Left lung (tissue), 14 donors: ENCODE measurements at regions of chr21 and their contacts with region 1.

Region 1: GRCh38 chr21:42107881-42108553 is 36.9 kb downstream of the UMODL1 start:
- DNase-seq: peak in 3 of 4 donors; percentile 52 to 88 (median 61)
- ATAC-seq: peak; percentile 98
- H3K4me3 ChIP-seq: no peak overlapping the region
- H3K27ac ChIP-seq: no peak overlapping the region
- H3K4me1 ChIP-seq: no peaks in the 10 kb centered on the region
- H3K27me3 ChIP-seq: no peaks in the 10 kb centered on the region
- CTCF ChIP-seq: peak; percentile 69 to 80

Region 2: GRCh38 chr21:42009831-42010523 is 98.0 kb before region 1 on chr21 and contains the start of gene ZBTB21:
- intact Hi-C with region 1: loop called in 1 of 2 experiments (anchors 10 kb)
- DNase-seq: peak; percentile 97 to 99 (median 98)
- ATAC-seq: peak; percentile 93
- H3K4me3 ChIP-seq: peak within 1 kb of the TSS; percentile 75 to 84
- H3K27ac ChIP-seq: peak within 1 kb of the TSS; percentile 96 to 98
- H3K4me1 ChIP-seq: peaks cover 3 to 12% of the 10 kb centered on the region in 2 donors
- H3K27me3 ChIP-seq: peaks cover 0 to 21% of the 10 kb centered on the region in 2 donors
- CTCF ChIP-seq: no peak
- polyA plus RNA-seq, gene ZBTB21: 9.2 to 11.0 (median 10.5) TPM

Region 3: GRCh38 chr21:42340187-42341050 is 232.4 kb after region 1 on chr21:
- intact Hi-C with region 1: no loop called
- DNase-seq: no peak
- ATAC-seq: no peak
- H3K4me3 ChIP-seq: no peak overlapping the region
- H3K27ac ChIP-seq: no peak overlapping the region
- H3K4me1 ChIP-seq: peaks cover 0 to 9% of the 10 kb centered on the region in 2 donors
- H3K27me3 ChIP-seq: no peaks in the 10 kb centered on the region
- CTCF ChIP-seq: no peak